CD4-positive, alpha-beta T cell (primary cell): ENCODE measurements at regions of chr7 and their contacts with region 1.

Region 1: DNA sequence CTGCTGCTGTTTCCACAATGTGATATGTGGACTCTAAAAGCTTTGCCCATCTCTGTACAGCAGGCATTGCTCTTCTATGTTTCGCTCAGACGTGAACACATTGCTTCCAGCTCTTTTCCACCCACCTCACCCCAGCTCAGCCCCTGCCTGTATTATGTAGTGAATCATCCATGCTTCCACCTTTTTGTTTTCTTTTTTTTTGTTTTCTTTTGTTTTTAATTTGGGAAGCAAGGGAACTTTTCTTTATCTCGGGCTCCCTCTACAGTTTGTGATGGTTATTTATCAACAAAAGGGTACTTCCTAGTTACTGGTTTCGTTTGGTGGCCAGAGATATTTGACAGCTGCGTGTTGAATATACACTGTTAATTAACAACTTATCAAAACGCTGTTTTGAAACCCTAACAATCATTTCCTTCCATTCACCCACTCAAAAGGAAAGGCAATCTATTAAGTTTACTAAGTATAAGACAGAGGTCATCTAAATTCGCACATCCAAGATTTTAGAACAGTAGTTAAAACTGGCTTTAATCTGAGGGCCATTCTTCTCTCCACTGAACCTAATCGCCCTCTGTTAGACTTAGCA is 127.9 kb upstream of the STK17A start:
- DNase-seq: peak in 2 of 14 experiments; percentile 13 to 18
- ATAC-seq: no peak
- H3K4me3 ChIP-seq: no peak overlapping the region
- H3K4me3 Mint-ChIP-seq: no peak overlapping the region
- H3K27ac ChIP-seq: no peak overlapping the region
- H3K27ac Mint-ChIP-seq: no peak overlapping the region
- H3K4me1 ChIP-seq: no peaks in the 10 kb centered on the region
- H3K4me1 Mint-ChIP-seq: no peaks in the 10 kb centered on the region
- H3K27me3 ChIP-seq: no peaks in the 10 kb centered on the region
- H3K27me3 Mint-ChIP-seq: peaks cover 11% of the 10 kb centered on the region
- CTCF ChIP-seq: peak; percentile 24

Region 2: GRCh38 chr7:43572516-43573049 is 117.6 kb after region 1 on chr7:
- CTCF ChIA-PET with region 1: no interaction called
- POLR2A ChIA-PET with region 1: no interaction called
- intact Hi-C with region 1: no loop called
- DNase-seq: peak in 6 of 14 experiments; percentile 12 to 74 (median 42)
- ATAC-seq: peak; percentile 74
- H3K4me3 ChIP-seq: no peak overlapping the region
- H3K4me3 Mint-ChIP-seq: no peak overlapping the region
- H3K27ac ChIP-seq: no peak overlapping the region
- H3K27ac Mint-ChIP-seq: no peak overlapping the region
- H3K4me1 ChIP-seq: no peaks in the 10 kb centered on the region
- H3K4me1 Mint-ChIP-seq: peaks cover 5% of the 10 kb centered on the region
- H3K27me3 ChIP-seq: no peaks in the 10 kb centered on the region
- H3K27me3 Mint-ChIP-seq: no peaks in the 10 kb centered on the region
- CTCF ChIP-seq: no peak

Region 3: DNA sequence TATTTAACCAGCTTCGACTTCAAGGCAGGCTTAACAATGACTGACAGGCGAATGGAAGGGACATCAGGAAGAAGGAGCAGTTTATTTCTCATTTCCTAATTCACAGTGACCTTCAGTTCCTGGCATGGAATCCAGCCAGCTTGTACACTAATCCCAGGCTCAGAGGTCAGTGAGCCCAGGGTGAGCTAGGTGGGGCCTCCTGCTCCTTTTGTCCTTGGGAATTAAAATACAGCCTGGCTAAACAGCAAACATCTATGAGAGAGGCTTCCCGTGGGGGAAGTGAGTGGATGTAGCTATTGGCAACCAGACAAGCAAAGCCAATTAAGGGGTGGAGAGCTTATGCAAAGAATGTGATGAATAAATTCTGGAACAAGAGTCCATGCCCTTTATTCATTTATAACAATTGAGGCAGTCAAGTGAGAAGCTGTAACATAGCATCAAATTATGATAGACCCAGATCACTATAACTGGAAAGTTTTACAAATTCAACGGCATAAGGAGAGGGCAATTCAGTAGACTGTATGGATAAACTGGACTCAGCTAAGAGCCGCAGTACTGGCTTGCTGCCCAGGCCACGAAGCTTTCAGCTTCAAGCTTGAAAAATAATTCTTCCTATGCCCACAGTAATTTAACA is 184.9 kb after region 1 on chr7:
- CTCF ChIA-PET with region 1: no interaction called
- POLR2A ChIA-PET with region 1: no interaction called
- intact Hi-C with region 1: no loop called
- DNase-seq: no peak
- ATAC-seq: no peak
- H3K4me3 ChIP-seq: no peak overlapping the region
- H3K4me3 Mint-ChIP-seq: peak overlapping the region; percentile 61
- H3K27ac ChIP-seq: peak overlapping the region; percentile 46 to 51
- H3K27ac Mint-ChIP-seq: peak overlapping the region; percentile 87
- H3K4me1 ChIP-seq: peaks cover 71% of the 10 kb centered on the region
- H3K4me1 Mint-ChIP-seq: peaks cover 96% of the 10 kb centered on the region
- H3K27me3 ChIP-seq: no peaks in the 10 kb centered on the region
- H3K27me3 Mint-ChIP-seq: no peaks in the 10 kb centered on the region
- CTCF ChIP-seq: no peak

Region 4: DNA sequence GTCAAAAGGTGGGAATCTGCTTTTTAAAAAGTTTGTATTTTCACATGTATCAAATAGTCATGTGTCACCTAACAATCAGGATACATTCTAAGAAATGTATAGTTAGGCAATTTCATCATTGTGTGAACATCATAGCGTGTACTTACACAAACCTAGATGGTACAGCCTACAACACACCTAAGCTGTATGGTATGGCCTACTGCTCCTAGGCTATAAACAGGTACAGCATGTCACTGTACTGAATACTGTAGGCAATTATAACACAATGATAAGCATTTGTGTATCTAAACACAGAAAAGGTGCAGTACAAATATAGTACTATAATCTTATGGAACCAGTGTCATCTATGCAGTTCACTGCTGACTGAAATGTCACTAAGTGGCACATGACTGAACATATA is 256.5 kb after region 1 on chr7:
- CTCF ChIA-PET with region 1: no interaction called
- POLR2A ChIA-PET with region 1: no interaction called
- intact Hi-C with region 1: loop called in 1 of 2 experiments (anchors 10 kb)
- DNase-seq: no peak
- ATAC-seq: no peak
- H3K4me3 ChIP-seq: no peak overlapping the region
- H3K4me3 Mint-ChIP-seq: no peak overlapping the region
- H3K27ac ChIP-seq: no peak overlapping the region
- H3K27ac Mint-ChIP-seq: no peak overlapping the region
- H3K4me1 ChIP-seq: peaks cover under 1% of the 10 kb centered on the region
- H3K4me1 Mint-ChIP-seq: peaks cover 35% of the 10 kb centered on the region
- H3K27me3 ChIP-seq: no peaks in the 10 kb centered on the region
- H3K27me3 Mint-ChIP-seq: no peaks in the 10 kb centered on the region
- CTCF ChIP-seq: no peak

Region 5: DNA sequence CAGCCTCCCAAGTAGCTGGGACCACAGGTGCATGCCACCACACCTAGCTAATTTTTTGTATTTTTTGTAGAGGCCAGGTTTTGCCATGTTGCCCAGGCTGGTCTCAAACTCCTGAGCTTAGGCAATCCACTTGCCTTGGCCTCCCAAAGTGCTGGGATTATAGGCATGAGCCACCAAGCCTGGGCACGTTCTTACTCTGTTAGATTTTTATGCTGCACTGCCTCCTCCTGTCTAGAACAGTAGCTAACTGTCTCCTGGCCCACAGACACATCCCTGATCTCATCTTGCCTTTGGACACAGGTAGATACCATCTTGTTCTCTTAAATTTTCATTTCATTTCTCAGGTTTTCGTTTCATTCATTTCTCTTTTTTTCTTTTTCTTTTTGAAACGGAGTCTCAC is 344.6 kb after region 1 on chr7:
- CTCF ChIA-PET with region 1: no interaction called
- POLR2A ChIA-PET with region 1: no interaction called
- intact Hi-C with region 1: no loop called
- DNase-seq: peak in 1 of 14 experiments; percentile 8
- ATAC-seq: no peak
- H3K4me3 ChIP-seq: no peak overlapping the region
- H3K4me3 Mint-ChIP-seq: no peak overlapping the region
- H3K27ac ChIP-seq: no peak overlapping the region
- H3K27ac Mint-ChIP-seq: no peak overlapping the region
- H3K4me1 ChIP-seq: no peaks in the 10 kb centered on the region
- H3K4me1 Mint-ChIP-seq: no peaks in the 10 kb centered on the region
- H3K27me3 ChIP-seq: no peaks in the 10 kb centered on the region
- H3K27me3 Mint-ChIP-seq: no peaks in the 10 kb centered on the region
- CTCF ChIP-seq: no peak